Calu3 (cell line): ENCODE measurements at regions of chr6 and their contacts with region 1.

Region 1: DNA sequence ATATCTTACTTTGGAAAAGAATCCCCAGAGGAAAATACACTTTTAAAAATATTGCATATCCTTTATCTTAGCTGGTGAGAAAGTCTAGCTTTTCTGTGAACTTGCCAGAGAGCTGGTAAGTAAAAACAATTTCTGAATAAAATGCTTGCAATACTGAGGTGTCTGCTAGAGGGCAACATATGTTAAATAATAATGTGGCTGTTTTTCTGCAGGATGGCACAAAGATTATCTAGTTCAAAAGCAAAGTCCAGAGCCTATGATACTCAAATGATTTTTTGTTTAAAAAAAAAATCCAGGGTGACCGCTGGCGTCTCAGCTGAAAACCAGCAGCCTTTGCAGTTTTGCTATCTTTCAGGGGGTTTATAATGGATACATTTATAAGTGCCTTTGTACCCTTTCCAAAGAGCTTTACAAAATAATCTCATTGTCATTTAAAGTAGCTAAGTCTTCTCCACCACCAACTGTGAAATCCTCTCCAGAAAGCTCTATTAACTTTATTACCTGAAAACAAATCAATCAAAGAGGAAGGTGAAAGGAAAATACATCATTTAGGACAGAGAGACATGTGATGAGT is 194.9 kb downstream of the PHACTR1 start:
- DNase-seq: no peak
- H3K4me3 Mint-ChIP-seq: no peak overlapping the region
- H3K27ac Mint-ChIP-seq: no peak overlapping the region
- H3K4me1 Mint-ChIP-seq: no peaks in the 10 kb centered on the region
- H3K27me3 Mint-ChIP-seq: peaks cover 81% of the 10 kb centered on the region
- CTCF ChIP-seq: peak; percentile 14

Region 2: GRCh38 chr6:13217206-13217905 is 305.9 kb after region 1 on chr6:
- CTCF ChIA-PET with region 1: no interaction called
- intact Hi-C with region 1: loop called (anchors 1 kb)
- DNase-seq: no peak
- H3K4me3 Mint-ChIP-seq: no peak overlapping the region
- H3K27ac Mint-ChIP-seq: no peak overlapping the region
- H3K4me1 Mint-ChIP-seq: no peaks in the 10 kb centered on the region
- H3K27me3 Mint-ChIP-seq: peaks cover 16% of the 10 kb centered on the region
- CTCF ChIP-seq: no peak